CD8-positive, alpha-beta T cell (primary cell): ENCODE measurements at regions of chr1 and their contacts with region 1.

Region 1: GRCh38 chr1:226062558-226063223 is at the start of gene H3-3A:
- DNase-seq: peak; percentile 96 to 99 (median 98)
- ATAC-seq: peak; percentile 85
- H3K4me3 ChIP-seq: peak within 1 kb of the TSS; percentile 84 to 92
- H3K4me3 Mint-ChIP-seq: peak within 1 kb of the TSS; percentile 100
- H3K27ac ChIP-seq: peak within 1 kb of the TSS; percentile 90 to 91
- H3K27ac Mint-ChIP-seq: peak within 1 kb of the TSS; percentile 100
- H3K4me1 ChIP-seq: peaks cover 42% of the 10 kb centered on the region
- H3K4me1 Mint-ChIP-seq: peaks cover 49% of the 10 kb centered on the region
- H3K27me3 ChIP-seq: no peaks in the 10 kb centered on the region
- H3K27me3 Mint-ChIP-seq: no peaks in the 10 kb centered on the region
- CTCF ChIP-seq: no peak
- total RNA-seq, gene H3-3A: 439 to 447 TPM

Region 2: DNA sequence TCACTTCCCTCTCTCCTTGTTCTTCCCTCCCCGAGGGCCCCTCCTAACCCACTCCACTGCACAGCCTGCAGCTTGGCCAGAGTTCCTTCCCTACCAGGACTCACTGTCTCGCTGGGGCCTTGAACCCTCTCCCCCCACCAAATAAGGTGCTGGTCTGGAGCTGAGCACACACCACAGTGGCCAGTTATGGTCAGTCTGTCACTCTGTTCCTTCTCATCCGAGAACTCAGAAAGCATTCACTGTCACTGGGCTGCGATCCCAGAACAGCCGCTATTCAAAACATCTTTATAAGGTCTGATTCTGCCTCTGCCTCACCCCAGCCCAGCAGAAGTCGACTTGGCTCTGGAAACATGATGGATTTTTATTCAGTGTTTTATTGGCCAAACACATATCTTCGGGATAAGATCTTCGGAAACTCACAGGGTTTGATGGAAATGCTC is 615.0 kb before region 1 on chr1:
- CTCF ChIA-PET with region 1: no interaction called
- POLR2A ChIA-PET with region 1: interaction called, 10 read pairs
- intact Hi-C with region 1: loop called in 1 of 2 experiments (anchors 1 kb)
- DNase-seq: peak in 1 of 9 experiments; percentile 25
- ATAC-seq: no peak
- H3K4me3 ChIP-seq: no peak overlapping the region
- H3K4me3 Mint-ChIP-seq: no peak overlapping the region
- H3K27ac ChIP-seq: no peak overlapping the region
- H3K27ac Mint-ChIP-seq: peak overlapping the region; percentile 14
- H3K4me1 ChIP-seq: peaks cover 35% of the 10 kb centered on the region
- H3K4me1 Mint-ChIP-seq: peaks cover 51% of the 10 kb centered on the region
- H3K27me3 ChIP-seq: no peaks in the 10 kb centered on the region
- H3K27me3 Mint-ChIP-seq: no peaks in the 10 kb centered on the region
- CTCF ChIP-seq: no peak

Region 3: DNA sequence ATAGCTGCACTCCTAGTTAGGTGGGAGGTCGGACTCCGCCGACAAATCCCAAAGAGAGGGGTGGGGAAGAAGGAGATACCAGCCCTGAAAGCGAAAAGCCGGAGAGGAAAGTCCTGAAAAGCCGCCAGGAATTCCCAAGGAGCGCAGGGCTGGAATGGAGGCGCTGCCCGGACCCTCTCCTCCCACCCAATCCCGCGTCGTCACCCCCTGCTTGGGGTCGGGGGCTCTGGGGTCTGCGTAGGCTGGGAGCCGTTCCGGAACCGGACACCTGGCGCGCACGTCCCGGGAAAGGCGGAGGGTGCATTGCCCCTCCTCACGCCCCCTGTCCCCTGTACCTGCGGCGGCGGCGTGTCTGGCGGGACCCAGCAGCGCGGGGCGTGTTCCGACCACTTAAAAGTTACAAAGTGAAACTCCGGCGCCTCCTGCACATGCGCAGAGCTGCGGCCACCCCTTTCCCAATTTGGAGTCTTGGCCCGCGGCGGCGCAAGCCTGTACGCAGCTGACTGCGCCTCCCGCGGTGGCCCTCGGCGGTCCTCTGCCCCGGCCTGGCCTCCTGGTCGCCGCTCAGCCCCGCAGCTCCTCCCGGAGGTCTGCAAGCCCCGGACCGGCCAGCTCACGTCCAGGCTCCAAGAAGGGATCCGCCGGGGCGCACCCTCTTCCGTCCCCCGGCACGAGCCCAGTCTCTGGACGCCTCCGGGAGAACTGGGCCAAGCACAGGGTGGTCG is 180.6 kb before region 1 on chr1 and contains the start of gene TMEM63A:
- CTCF ChIA-PET with region 1: no interaction called
- POLR2A ChIA-PET with region 1: interaction called, 5 read pairs
- intact Hi-C with region 1: loop called in 1 of 2 experiments (anchors 5 kb)
- DNase-seq: peak; percentile 78 to 95 (median 92)
- ATAC-seq: peak; percentile 72
- H3K4me3 ChIP-seq: peak within 1 kb of the TSS; percentile 85 to 100
- H3K4me3 Mint-ChIP-seq: peak within 1 kb of the TSS; percentile 94
- H3K27ac ChIP-seq: peak within 1 kb of the TSS; percentile 65 to 84
- H3K27ac Mint-ChIP-seq: peak within 1 kb of the TSS; percentile 97
- H3K4me1 ChIP-seq: peaks cover 42% of the 10 kb centered on the region
- H3K4me1 Mint-ChIP-seq: peaks cover 52% of the 10 kb centered on the region
- H3K27me3 ChIP-seq: no peaks in the 10 kb centered on the region
- H3K27me3 Mint-ChIP-seq: no peaks in the 10 kb centered on the region
- CTCF ChIP-seq: no peak
- total RNA-seq, gene TMEM63A: 132 to 144 TPM

Region 4: GRCh38 chr1:225999227-225999911 is 63.3 kb before region 1 on chr1 and contains the start of gene SDE2:
- CTCF ChIA-PET with region 1: interaction called, 16 read pairs
- POLR2A ChIA-PET with region 1: interaction called, 195 read pairs
- intact Hi-C with region 1: loop called (anchors 1 kb)
- DNase-seq: peak; percentile 99 to 100 (median 100)
- ATAC-seq: peak; percentile 80
- H3K4me3 ChIP-seq: peak within 1 kb of the TSS; percentile 82 to 92
- H3K4me3 Mint-ChIP-seq: peak within 1 kb of the TSS; percentile 100
- H3K27ac ChIP-seq: peak within 1 kb of the TSS; percentile 99
- H3K27ac Mint-ChIP-seq: peak within 1 kb of the TSS; percentile 100
- H3K4me1 ChIP-seq: peaks cover 88% of the 10 kb centered on the region
- H3K4me1 Mint-ChIP-seq: peaks cover 79% of the 10 kb centered on the region
- H3K27me3 ChIP-seq: no peaks in the 10 kb centered on the region
- H3K27me3 Mint-ChIP-seq: no peaks in the 10 kb centered on the region
- CTCF ChIP-seq: no peak
- total RNA-seq, gene SDE2: 53.3 to 55.3 TPM

Region 5: DNA sequence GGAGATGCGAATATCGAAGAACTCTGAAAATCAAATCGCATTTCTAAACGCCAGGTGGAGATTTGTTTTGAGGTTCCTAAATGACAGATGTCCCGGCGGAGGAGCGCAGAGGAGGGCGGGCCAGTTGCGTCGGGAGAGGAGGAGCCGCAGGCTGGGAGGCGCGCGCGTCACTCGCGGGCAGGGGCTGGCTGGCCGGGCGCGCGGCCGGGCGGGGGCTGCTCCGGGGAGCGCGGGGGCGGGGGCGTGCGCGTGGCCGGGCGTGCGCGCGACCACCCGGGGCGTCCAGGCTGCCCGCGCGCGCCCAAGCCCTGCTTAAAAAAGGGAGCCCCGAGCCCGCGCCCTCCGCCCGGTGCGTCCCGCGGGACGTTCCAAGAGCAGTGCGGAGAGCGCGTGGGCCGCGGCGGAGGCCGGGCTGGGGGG is 47.1 kb after region 1 on chr1:
- CTCF ChIA-PET with region 1: interaction called, 12 read pairs
- POLR2A ChIA-PET with region 1: interaction called, 20 read pairs
- intact Hi-C with region 1: loop called (anchors 2 kb)
- DNase-seq: peak; percentile 49 to 89 (median 76)
- ATAC-seq: peak; percentile 85
- H3K4me3 ChIP-seq: peak overlapping the region; percentile 54 to 63
- H3K4me3 Mint-ChIP-seq: peak overlapping the region; percentile 94
- H3K27ac ChIP-seq: peak overlapping the region; percentile 52 to 74
- H3K27ac Mint-ChIP-seq: peak overlapping the region; percentile 88
- H3K4me1 ChIP-seq: peaks cover 11% of the 10 kb centered on the region
- H3K4me1 Mint-ChIP-seq: peaks cover 18% of the 10 kb centered on the region
- H3K27me3 ChIP-seq: no peaks in the 10 kb centered on the region
- H3K27me3 Mint-ChIP-seq: no peaks in the 10 kb centered on the region
- CTCF ChIP-seq: no peak

Region 6: GRCh38 chr1:226176870-226177269 is 114.2 kb after region 1 on chr1:
- CTCF ChIA-PET with region 1: no interaction called
- POLR2A ChIA-PET with region 1: no interaction called
- intact Hi-C with region 1: no loop called
- DNase-seq: no peak
- ATAC-seq: no peak
- H3K4me3 ChIP-seq: no peak overlapping the region
- H3K4me3 Mint-ChIP-seq: no peak overlapping the region
- H3K27ac ChIP-seq: no peak overlapping the region
- H3K27ac Mint-ChIP-seq: no peak overlapping the region
- H3K4me1 ChIP-seq: peaks cover 16% of the 10 kb centered on the region
- H3K4me1 Mint-ChIP-seq: peaks cover 61% of the 10 kb centered on the region
- H3K27me3 ChIP-seq: no peaks in the 10 kb centered on the region
- H3K27me3 Mint-ChIP-seq: no peaks in the 10 kb centered on the region
- CTCF ChIP-seq: no peak